Naive thymus-derived CD8-positive, alpha-beta T cell (primary cell): ENCODE measurements at regions of chr20 and their contacts with region 1.

Region 1: DNA sequence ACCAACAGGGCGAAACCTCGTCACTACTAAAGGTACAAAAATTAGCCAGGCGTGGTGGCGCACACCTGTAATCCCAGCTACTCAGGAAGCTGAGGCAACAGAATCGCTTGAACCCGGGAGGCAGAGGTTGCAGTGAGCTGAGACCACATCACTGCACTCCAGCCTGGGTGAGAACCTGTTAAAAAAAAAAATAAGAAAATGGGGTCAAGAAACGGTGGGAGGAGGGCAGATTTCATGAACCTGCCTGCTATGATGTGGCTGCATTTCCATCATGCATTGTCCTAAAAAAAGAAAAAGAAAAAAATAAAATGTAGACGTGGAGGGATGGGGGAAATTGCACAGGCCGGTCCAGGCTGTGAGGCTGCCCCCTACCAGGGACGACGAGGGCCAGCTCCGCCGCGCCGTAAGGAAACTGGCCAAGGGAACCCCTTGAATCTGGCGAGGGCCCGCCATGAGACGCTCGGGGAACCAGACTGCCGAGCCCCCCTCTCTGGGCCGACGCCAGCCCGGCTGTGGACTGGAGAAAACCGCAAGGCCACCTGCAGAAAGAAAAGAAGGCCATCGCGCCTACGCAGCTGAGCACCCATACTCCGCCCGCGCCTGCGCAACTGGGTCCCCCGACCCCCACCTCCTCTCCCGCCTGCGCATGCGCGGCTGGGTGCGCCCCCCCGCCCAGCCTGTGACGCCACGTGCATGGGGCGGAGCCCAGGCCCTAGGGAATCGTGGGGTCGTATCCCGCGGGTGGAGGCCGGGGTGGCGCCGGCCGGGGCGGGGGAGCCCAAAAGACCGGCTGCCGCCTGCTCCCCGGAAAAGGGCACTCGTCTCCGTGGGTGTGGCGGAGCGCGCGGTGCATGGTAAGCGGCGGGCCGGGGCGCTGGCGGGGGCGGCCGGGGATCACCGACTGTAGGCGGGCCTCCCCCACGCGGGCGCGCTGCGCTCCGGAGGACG is at the start of gene ENTPD6:
- DNase-seq: peak; percentile 90 to 98 (median 96)
- ATAC-seq: peak; percentile 73 to 77
- H3K4me3 Mint-ChIP-seq: peak within 1 kb of the TSS; percentile 86 to 95 (median 92)
- H3K27ac Mint-ChIP-seq: peak within 1 kb of the TSS; percentile 78 to 98 (median 97)
- H3K4me1 Mint-ChIP-seq: peaks cover 29 to 57% (median 48%) of the 10 kb centered on the region in 4 donors
- H3K27me3 Mint-ChIP-seq: peaks cover 0 to 1% (median 0%) of the 10 kb centered on the region in 5 donors
- polyA plus RNA-seq, gene ENTPD6: 39.9 to 50.5 (median 44.7) TPM

Region 2: DNA sequence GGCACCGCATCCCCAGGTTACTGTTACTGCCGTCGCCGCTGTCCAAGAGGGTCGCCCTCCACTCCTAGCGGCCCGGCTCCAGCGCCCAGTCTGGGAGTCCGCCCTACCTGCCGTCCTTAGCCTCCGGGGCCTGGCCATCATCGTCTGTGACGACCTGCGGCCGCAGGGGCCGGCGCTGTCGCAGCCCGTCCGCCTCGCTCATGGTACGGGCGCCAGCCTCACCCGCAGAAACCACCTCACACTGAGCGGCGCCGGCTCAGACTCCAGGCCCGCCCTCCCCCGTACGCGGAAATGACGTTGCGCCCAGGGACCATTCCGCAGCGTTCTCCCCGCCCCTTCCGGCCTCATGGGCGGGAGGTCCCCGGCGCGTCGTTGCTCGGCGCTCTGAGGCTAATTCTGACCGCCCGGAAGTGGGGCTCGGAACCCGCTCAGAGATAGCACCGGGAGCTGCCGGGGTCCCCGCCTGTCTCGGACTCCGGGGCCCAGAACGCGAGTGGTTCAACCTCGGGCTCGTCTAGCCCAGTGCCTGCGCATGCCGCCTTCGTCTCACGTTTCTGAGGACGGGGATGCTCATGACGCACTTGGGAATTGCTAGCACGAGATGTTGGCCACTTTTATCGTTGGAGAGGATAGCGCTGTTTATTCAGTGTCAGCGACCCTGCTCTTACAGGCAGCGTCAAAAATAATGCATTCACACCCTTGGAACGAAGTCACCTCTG is 202.6 kb before region 1 on chr20 and contains the start of gene APMAP:
- POLR2A ChIA-PET with region 1: interaction called, 22 read pairs
- DNase-seq: peak; percentile 89 to 97 (median 95)
- ATAC-seq: peak; percentile 92 to 93
- H3K4me3 Mint-ChIP-seq: peak within 1 kb of the TSS; percentile 93 to 97 (median 96)
- H3K27ac Mint-ChIP-seq: peak within 1 kb of the TSS; percentile 93 to 99 (median 98)
- H3K4me1 Mint-ChIP-seq: peaks cover 36 to 72% (median 56%) of the 10 kb centered on the region in 4 donors
- H3K27me3 Mint-ChIP-seq: no peaks in the 10 kb centered on the region
- polyA plus RNA-seq, gene APMAP: 74.5 to 234 (median 81.7) TPM

Region 3: GRCh38 chr20:25090492-25091429 is 104.5 kb before region 1 on chr20:
- POLR2A ChIA-PET with region 1: interaction called, 12 read pairs
- DNase-seq: peak; percentile 55 to 89 (median 78)
- ATAC-seq: peak; percentile 99
- H3K4me3 Mint-ChIP-seq: peak overlapping the region in 9 of 10 donors; percentile 21 to 76 (median 72)
- H3K27ac Mint-ChIP-seq: peak overlapping the region; percentile 39 to 95 (median 86)
- H3K4me1 Mint-ChIP-seq: peaks cover 21 to 48% (median 32%) of the 10 kb centered on the region in 4 donors
- H3K27me3 Mint-ChIP-seq: peaks cover under 1 to 12% (median 7%) of the 10 kb centered on the region in 5 donors

Region 4: DNA sequence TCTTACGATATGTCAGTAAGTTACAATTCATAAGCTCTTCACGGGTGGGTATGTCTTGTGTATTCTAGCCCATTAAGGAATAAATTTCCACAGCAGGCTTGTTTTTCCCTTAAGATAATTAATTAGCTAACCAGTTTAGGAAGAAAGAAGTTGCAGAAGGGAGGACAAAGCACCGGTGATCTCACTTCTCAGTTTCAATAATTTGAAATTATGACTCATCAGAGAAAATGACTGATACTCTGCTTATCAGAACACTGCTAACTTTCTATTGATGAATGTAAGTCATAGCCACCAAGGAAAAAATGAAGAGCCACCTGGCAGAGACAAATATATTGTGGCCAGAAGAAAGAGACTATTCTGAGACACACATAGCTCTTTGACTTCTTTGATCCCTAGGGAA is 34.8 kb before region 1 on chr20:
- POLR2A ChIA-PET with region 1: no interaction called
- DNase-seq: no peak
- ATAC-seq: no peak
- H3K4me3 Mint-ChIP-seq: no peak overlapping the region
- H3K27ac Mint-ChIP-seq: no peak overlapping the region
- H3K4me1 Mint-ChIP-seq: no peaks in the 10 kb centered on the region
- H3K27me3 Mint-ChIP-seq: peaks cover 0 to 8% (median 5%) of the 10 kb centered on the region in 5 donors

Region 5: GRCh38 chr20:25247956-25248785 is 52.9 kb after region 1 on chr20 and contains the start of gene PYGB:
- POLR2A ChIA-PET with region 1: interaction called, 36 read pairs
- DNase-seq: peak; percentile 45 to 82 (median 74)
- ATAC-seq: peak; percentile 80 to 81
- H3K4me3 Mint-ChIP-seq: peak within 1 kb of the TSS; percentile 87 to 100 (median 96)
- H3K27ac Mint-ChIP-seq: peak within 1 kb of the TSS; percentile 4 to 97 (median 92)
- H3K4me1 Mint-ChIP-seq: peaks cover 24 to 58% (median 47%) of the 10 kb centered on the region in 4 donors
- H3K27me3 Mint-ChIP-seq: peaks cover 0 to 4% (median 0%) of the 10 kb centered on the region in 5 donors
- polyA plus RNA-seq, gene PYGB: 39.9 to 107 (median 71.3) TPM

Region 6: DNA sequence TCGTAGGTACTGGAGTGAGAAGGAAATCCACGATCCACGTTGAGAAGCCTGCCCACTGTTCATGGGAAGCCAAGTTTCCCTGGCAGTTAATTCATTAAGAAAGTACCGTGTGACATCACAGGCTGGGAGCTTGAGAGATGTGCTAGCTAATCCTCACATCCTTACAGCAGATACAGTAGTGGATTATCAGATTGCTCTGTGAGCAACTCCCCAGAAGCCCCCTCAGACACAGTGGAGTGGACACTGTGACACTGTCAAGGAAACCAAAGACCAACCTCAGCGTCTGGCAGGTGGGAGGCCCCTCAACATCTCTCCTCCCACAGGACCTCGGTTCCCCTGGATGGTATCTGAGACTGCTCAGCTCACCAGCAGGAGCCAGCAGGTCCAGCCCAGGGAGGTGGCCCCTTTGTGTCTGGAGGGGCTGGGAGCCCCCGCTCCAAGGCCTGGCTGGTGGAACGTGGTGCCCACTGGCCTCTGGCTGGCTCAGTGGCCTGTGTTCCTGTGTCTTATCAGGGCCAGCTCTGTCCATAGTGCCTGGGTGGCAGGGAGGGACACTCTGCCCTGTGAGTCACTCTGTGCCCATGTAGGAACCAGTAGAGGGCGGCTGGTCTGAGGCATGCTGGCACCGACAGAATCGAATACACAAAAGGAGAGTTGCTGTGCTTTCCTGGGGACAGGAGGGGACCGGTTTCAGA is 59.8 kb after region 1 on chr20:
- POLR2A ChIA-PET with region 1: interaction called, 36 read pairs
- DNase-seq: peak in 1 of 10 donors; percentile 47
- ATAC-seq: no peak
- H3K4me3 Mint-ChIP-seq: peak overlapping the region in 1 of 10 donors; percentile 20
- H3K27ac Mint-ChIP-seq: peak overlapping the region in 9 of 10 donors; percentile 39 to 93 (median 67)
- H3K4me1 Mint-ChIP-seq: peaks cover 38 to 87% (median 77%) of the 10 kb centered on the region in 4 donors
- H3K27me3 Mint-ChIP-seq: no peaks in the 10 kb centered on the region